ENCODE measurements at regions of chr9 and their contacts with region 1.

Region 1: DNA sequence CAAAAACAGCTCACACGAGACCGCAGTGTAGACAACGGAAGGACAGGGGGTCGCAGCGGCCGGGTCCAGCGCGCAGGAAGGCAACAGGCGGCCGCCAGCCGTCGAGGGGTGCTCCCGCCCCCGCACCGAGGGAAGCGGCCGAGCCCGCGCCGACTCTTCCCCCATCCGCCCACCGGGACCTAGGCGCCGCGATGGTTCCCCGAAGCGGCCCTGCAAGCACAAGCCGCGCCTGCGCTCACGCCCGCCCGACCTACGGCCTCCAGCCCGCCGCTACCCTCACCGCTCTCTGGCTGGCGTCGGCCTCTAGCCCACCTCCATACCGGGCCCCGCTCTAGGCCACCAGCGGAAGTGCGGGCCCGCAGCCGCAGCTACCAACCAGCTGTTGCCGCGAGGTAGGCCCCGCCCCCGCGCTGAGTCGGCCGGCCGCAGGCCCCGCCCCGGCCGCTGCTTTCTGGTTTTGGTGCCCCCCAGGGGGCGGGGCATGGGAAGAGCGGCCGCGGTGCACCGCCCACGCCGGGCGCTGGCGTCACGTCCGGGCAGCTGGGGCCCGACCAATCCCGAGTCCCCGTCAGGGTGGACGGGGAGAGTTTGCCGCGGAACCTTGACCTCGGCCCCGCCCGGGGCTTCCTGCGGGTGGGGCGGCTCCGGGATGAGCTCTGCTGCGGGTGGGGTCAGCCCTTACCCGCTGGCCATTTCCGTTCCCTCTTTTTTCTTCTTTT is at the start of gene SETX:
- DNase-seq: peak; percentile 85
- ATAC-seq: peak; percentile 92
- H3K4me3 ChIP-seq: peak within 1 kb of the TSS; percentile 86
- H3K27ac ChIP-seq: peak within 1 kb of the TSS; percentile 97
- H3K4me1 ChIP-seq: peaks cover 8% of the 10 kb centered on the region; the same call in 1 of the 2 replicates
- H3K27me3 ChIP-seq: no peaks in the 10 kb centered on the region
- CTCF ChIP-seq: no peak
- EP300 ChIP-seq: peak in 1 of 2 experiments; percentile 71; a peak in 2 of 4 replicates
- POLR2A ChIP-seq: peak; percentile 99
- RAD21 ChIP-seq: no peak
- polyA plus RNA-seq, gene SETX: 15.8 to 16.1 TPM

Region 2: DNA sequence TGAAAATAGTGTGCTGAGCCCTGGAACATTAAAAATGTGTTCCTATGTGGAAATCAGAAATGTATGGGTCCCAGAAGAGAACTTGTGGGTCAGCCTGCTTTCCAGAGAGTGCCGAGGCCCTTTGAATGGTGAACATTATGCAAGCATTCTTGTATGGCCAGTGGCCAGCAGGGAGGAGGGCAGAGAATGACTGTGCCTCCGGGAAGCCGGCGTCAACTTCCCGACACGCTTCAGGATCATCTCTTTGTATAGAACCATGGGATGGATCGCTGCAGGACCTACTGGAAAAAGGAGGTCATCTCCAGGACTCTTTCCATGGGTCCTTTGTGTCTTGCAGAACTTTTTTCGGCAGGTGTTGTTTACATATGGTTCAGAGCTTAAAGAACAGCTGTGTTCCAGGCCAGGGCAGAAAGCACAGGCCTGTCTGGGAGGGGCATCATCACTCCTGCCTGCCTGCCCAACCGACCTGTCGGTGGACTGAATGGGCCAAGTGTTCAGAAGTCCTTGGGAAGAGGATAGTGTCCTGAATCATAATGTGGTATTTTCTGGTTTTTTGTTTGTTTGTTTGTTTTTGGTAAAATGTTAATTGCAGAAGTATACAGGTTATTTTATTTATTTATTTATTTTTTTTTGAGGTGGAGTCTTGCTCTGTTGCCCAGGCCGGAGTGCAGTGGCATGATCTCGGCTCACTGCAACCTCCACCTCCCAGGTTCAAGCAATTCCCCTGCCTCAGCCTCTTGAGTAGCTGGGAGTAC is 951.9 kb before region 1 on chr9:
- CTCF ChIA-PET with region 1: no interaction called
- POLR2A ChIA-PET with region 1: no interaction called
- RAD21 ChIA-PET with region 1: no interaction called
- SMC1A ChIA-PET with region 1: no interaction called
- in situ Hi-C with region 1: no loop called
- intact Hi-C with region 1: no loop called
- DNase-seq: no peak
- ATAC-seq: no peak; the same call in 2 of the 3 replicates
- H3K4me3 ChIP-seq: no peak overlapping the region
- H3K27ac ChIP-seq: no peak overlapping the region; the same call in 1 of the 2 replicates
- H3K4me1 ChIP-seq: peaks cover 51% of the 10 kb centered on the region
- H3K27me3 ChIP-seq: no peaks in the 10 kb centered on the region
- CTCF ChIP-seq: no peak
- EP300 ChIP-seq: no peak
- POLR2A ChIP-seq: no peak
- RAD21 ChIP-seq: no peak

Region 3: DNA sequence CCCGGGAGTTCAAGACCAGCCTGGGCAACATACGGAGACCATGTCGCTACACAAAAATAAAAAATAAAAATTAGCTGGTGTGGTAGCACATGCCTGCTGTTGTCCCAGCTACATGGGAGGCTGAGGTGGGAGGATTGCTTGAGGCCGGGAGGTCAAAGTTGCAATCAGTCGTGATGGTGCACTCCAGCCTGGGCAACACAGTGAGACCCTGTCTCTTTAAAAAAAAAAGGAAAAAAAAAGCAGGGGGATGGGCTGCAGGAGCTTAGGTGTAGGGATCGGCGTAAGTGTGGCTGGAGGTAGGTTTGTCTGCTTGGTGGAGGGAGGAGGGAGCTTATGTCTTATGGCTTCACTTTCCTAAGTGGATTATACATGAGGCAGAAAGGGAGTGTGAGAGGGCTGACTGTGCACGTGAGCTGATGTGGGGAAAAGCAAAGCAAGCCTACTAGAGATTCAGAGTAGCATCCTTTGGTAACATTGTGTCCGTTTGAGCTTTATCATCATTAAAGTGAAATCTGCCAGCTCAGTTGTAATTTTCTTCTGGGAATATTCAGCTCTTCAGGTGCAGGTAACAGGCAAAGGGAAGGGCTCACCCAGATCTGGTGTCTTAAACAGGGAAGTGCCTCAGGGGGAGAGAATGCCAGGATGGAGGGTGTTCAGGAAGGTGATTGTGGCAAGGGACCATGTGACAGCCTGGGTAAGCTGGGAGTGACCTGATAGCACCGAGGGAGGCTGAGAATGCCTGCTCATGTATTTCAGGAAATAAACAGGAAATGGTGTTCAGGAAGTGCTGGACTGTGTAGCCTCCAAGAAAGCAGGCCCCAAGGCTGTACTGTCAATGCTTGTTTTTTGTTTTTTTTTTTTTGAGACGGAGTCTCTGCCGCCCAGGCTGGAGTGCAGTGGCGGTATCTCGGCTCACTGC is 17.6 kb after region 1 on chr9:
- CTCF ChIA-PET with region 1: interaction called, 6 read pairs
- POLR2A ChIA-PET with region 1: interaction called, 18 read pairs
- RAD21 ChIA-PET with region 1: interaction called, 15 read pairs
- SMC1A ChIA-PET with region 1: interaction called, 43 read pairs
- in situ Hi-C with region 1: no loop called
- intact Hi-C with region 1: loop called (anchors 1 kb)
- DNase-seq: no peak
- ATAC-seq: peak; percentile 14; the same call in 1 of the 3 replicates
- H3K4me3 ChIP-seq: no peak overlapping the region
- H3K27ac ChIP-seq: peak overlapping the region; percentile 47
- H3K4me1 ChIP-seq: peaks cover 18% of the 10 kb centered on the region
- H3K27me3 ChIP-seq: no peaks in the 10 kb centered on the region
- CTCF ChIP-seq: no peak
- EP300 ChIP-seq: no peak
- POLR2A ChIP-seq: no peak
- RAD21 ChIP-seq: no peak

Region 4: GRCh38 chr9:132381966-132382541 is 27.3 kb after region 1 on chr9:
- CTCF ChIA-PET with region 1: interaction called, 59 read pairs
- POLR2A ChIA-PET with region 1: interaction called, 96 read pairs
- RAD21 ChIA-PET with region 1: interaction called, 50 read pairs
- SMC1A ChIA-PET with region 1: interaction called, 131 read pairs
- in situ Hi-C with region 1: no loop called
- intact Hi-C with region 1: loop called (anchors 1 kb)
- DNase-seq: peak; percentile 90
- ATAC-seq: peak; percentile 90
- H3K4me3 ChIP-seq: peak overlapping the region; percentile 46; the same call in 1 of the 2 replicates
- H3K27ac ChIP-seq: peak overlapping the region; percentile 94
- H3K4me1 ChIP-seq: peaks cover 41% of the 10 kb centered on the region
- H3K27me3 ChIP-seq: no peaks in the 10 kb centered on the region
- CTCF ChIP-seq: no peak
- EP300 ChIP-seq: peak; percentile 83 to 86
- POLR2A ChIP-seq: peak; percentile 65
- RAD21 ChIP-seq: no peak

Region 5: DNA sequence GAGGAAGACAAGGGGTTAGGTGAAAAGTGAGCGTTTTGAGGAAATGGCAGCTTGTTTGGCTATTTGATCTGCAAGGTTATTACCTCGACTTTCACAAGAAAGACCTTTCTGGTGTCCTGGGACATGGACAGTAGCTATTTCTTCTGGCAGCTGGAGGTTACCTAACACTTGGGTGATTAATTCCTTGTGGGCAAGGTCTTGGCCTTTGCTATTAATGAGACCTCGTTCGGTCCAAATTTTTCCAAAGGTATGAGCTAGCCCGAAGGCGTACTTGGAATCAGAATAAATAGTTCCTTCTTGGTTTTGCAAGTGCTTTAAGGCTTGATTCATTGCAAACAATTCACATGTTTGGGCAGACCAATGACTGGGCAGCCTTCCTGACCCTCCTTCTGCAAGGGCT is 680.9 kb after region 1 on chr9:
- CTCF ChIA-PET with region 1: no interaction called
- POLR2A ChIA-PET with region 1: no interaction called
- RAD21 ChIA-PET with region 1: no interaction called
- SMC1A ChIA-PET with region 1: no interaction called
- in situ Hi-C with region 1: no loop called
- intact Hi-C with region 1: no loop called
- DNase-seq: no peak
- ATAC-seq: no peak
- H3K4me3 ChIP-seq: no peak overlapping the region
- H3K27ac ChIP-seq: no peak overlapping the region
- H3K4me1 ChIP-seq: peaks cover 6% of the 10 kb centered on the region
- H3K27me3 ChIP-seq: no peaks in the 10 kb centered on the region
- CTCF ChIP-seq: no peak
- EP300 ChIP-seq: no peak
- POLR2A ChIP-seq: no peak
- RAD21 ChIP-seq: no peak